ENCODE measurements at regions of chr14 and their contacts with region 1.

Region 1: GRCh38 chr14:76773188-76773885 is 12.1 kb downstream of the VASH1 start:
- DNase-seq: peak; percentile 76 to 91 (median 88)
- H3K4me3 ChIP-seq: peak overlapping the region in 4 of 7 experiments; percentile 5 to 43 (median 21)
- H3K27ac ChIP-seq: peak overlapping the region in 1 of 2 experiments; percentile 28
- H3K4me1 ChIP-seq: peaks cover 4 to 81% (median 63%) of the 10 kb centered on the region in 4 experiments
- H3K27me3 ChIP-seq: no peaks in the 10 kb centered on the region

Region 2: GRCh38 chr14:76761136-76761959 is 12.0 kb before region 1 on chr14 and contains the start of gene VASH1:
- CTCF ChIA-PET with region 1: interaction called, 200 read pairs
- POLR2A ChIA-PET with region 1: interaction called, 11 read pairs
- DNase-seq: peak; percentile 50 to 81 (median 73)
- H3K4me3 ChIP-seq: peak within 1 kb of the TSS; percentile 45 to 82 (median 61)
- H3K27ac ChIP-seq: no peak within 1 kb of the TSS
- H3K4me1 ChIP-seq: peaks cover 0 to 25% (median 19%) of the 10 kb centered on the region in 4 experiments
- H3K27me3 ChIP-seq: peaks cover 0 to 24% (median 8%) of the 10 kb centered on the region in 5 experiments

Region 3: GRCh38 chr14:76842421-76842820 is 69.1 kb after region 1 on chr14:
- CTCF ChIA-PET with region 1: no interaction called
- POLR2A ChIA-PET with region 1: no interaction called
- DNase-seq: no peak
- H3K4me3 ChIP-seq: no peak overlapping the region
- H3K27ac ChIP-seq: no peak overlapping the region
- H3K4me1 ChIP-seq: peaks cover 3 to 21% (median 11%) of the 10 kb centered on the region in 4 experiments
- H3K27me3 ChIP-seq: no peaks in the 10 kb centered on the region

Region 4: DNA sequence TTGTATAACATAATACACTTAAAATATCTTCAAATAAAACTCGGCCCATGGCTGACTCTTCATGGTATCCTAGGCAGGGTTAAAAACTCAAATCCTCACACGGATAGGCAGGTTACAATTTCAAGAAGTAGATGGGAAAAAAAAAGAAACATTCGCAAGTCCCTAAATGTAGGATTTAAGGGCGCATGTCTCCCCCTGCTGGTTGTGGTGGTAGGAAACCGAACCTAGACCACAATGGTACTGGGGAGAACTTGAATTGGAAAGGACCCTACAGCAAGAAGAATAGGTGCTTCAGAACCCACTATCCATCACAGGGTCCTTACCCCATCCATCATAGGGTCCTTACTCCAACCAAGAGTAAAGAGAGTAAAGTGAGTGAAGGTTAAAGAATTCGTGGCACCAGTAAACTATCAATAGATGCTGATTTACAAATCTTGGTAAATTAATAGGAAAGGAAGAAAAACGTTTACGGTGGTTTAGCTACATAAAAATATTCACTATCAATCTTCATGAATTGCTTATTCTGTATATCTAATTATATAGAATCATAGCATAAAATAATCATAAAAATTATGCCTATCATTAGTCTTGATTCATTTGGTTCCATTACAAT is 321.4 kb after region 1 on chr14:
- CTCF ChIA-PET with region 1: no interaction called
- POLR2A ChIA-PET with region 1: no interaction called
- DNase-seq: peak; percentile 87 to 92 (median 88)
- H3K4me3 ChIP-seq: no peak overlapping the region
- H3K27ac ChIP-seq: no peak overlapping the region
- H3K4me1 ChIP-seq: peaks cover 2 to 28% (median 22%) of the 10 kb centered on the region in 4 experiments
- H3K27me3 ChIP-seq: no peaks in the 10 kb centered on the region

Measured in common myeloid progenitor, CD34-positive (primary cell).